Activated T-helper 1 cell treated with anti-CD3 and anti-CD28 coated beads, Interleukin-12 subunit alpha, Interleukin-12 subunit beta, Interleukin-2, Interleukin-4 antibody, amounts not matched to agents 30 ng/mL and 10 ng/mL and 1 ng/mL, durations not matched to agents 14 hours and 24 hours and 36 hours (primary cell): ENCODE measurements at regions of chrX and their contacts with region 1.

Region 1: DNA sequence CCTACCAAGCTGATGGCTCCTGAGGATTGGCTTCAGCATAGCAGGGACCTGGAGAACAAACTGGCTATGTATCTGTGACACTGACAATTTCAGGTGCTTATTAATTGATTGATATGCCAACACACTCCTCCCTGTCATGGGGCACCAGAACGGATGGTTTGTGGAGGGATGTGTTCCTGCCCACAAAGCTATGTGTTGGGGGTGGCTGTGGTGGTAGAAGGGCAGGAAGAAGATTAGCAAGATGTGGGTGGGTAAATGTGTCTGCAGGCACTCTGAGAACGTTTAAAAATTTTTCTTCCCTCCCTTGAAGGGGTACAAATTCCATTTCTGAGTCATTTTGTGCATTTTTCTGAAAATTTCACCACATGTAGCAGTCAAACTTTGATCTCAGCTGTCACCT is 55.0 kb upstream of the SCML1 start:
- DNase-seq: no peak
- H3K4me3 Mint-ChIP-seq: peak overlapping the region; percentile 30
- H3K27ac Mint-ChIP-seq: peak overlapping the region; percentile 69
- H3K4me1 Mint-ChIP-seq: peaks cover 29% of the 10 kb centered on the region
- H3K27me3 Mint-ChIP-seq: no peaks in the 10 kb centered on the region

Region 2: GRCh38 chrX:17669458-17669857 is 12.8 kb before region 1 on chrX:
- intact Hi-C with region 1: loop called (anchors 1 kb)
- DNase-seq: no peak
- H3K4me3 Mint-ChIP-seq: peak overlapping the region; percentile 48
- H3K27ac Mint-ChIP-seq: peak overlapping the region; percentile 72
- H3K4me1 Mint-ChIP-seq: peaks cover 23% of the 10 kb centered on the region
- H3K27me3 Mint-ChIP-seq: peaks cover 1% of the 10 kb centered on the region

Region 3: GRCh38 chrX:18394477-18394876 is 712.2 kb after region 1 on chrX:
- intact Hi-C with region 1: no loop called
- DNase-seq: no peak
- H3K4me3 Mint-ChIP-seq: no peak overlapping the region
- H3K27ac Mint-ChIP-seq: no peak overlapping the region
- H3K4me1 Mint-ChIP-seq: peaks cover 6% of the 10 kb centered on the region
- H3K27me3 Mint-ChIP-seq: no peaks in the 10 kb centered on the region